ENCODE measurements at regions of chr11 and their contacts with region 1.

Region 1: GRCh38 chr11:112588252-112588694 is 327.6 kb upstream of the PLET1 start:
- DNase-seq: peak; percentile 69
- H3K4me3 ChIP-seq: no peak overlapping the region
- H3K27ac ChIP-seq: peak overlapping the region in 1 of 2 experiments; percentile 62; a peak in 2 of 4 replicates
- H3K4me1 ChIP-seq: peaks cover 7% of the 10 kb centered on the region in 2 experiments; a peak in 3 of 4 replicates
- H3K27me3 ChIP-seq: no peaks in the 10 kb centered on the region
- CTCF ChIP-seq: peak; percentile 85
- EP300 ChIP-seq: no peak
- RAD21 ChIP-seq: peak; percentile 97

Region 2: DNA sequence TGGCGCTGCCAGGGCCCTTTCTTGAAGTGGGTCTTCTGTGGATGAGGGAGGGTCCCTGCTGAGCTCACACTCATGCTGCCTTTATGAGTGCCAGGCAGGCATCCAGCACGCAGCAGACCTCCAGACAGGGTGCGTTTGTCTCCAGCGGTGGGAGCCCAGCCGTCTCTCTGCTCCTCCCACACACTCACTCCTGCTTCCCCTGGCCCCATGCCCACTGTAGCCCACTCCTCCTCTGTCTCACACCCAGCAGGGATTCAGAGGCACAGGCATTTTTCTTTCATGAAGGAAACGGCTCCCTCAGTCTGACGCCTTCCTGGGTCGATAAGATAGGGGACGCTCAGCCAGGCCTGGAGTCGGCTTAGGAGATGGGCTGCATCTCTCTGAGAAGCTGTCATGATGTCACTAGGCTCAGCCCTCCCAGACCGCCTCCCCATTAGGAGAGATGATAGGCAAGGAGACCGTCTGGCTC is 189.0 kb after region 1 on chr11:
- CTCF ChIA-PET with region 1: interaction called, 27 read pairs
- POLR2A ChIA-PET with region 1: interaction called, 5 read pairs
- DNase-seq: peak; percentile 84
- H3K4me3 ChIP-seq: no peak overlapping the region; a peak in 1 of 4 replicates
- H3K27ac ChIP-seq: peak overlapping the region; percentile 22 to 99; a peak in 3 of 4 replicates
- H3K4me1 ChIP-seq: peaks cover 10 to 57% of the 10 kb centered on the region in 2 experiments
- H3K27me3 ChIP-seq: no peaks in the 10 kb centered on the region
- CTCF ChIP-seq: no peak
- EP300 ChIP-seq: no peak; a peak in 1 of 4 replicates
- RAD21 ChIP-seq: no peak; the same call in none of the 2 replicates

Region 3: GRCh38 chr11:112837162-112837826 is 249.0 kb after region 1 on chr11:
- CTCF ChIA-PET with region 1: interaction called, 18 read pairs
- POLR2A ChIA-PET with region 1: interaction called, 3 read pairs
- DNase-seq: peak; percentile 33
- H3K4me3 ChIP-seq: no peak overlapping the region
- H3K27ac ChIP-seq: peak overlapping the region in 1 of 2 experiments; percentile 97; a peak in 2 of 4 replicates
- H3K4me1 ChIP-seq: peaks cover 18 to 52% of the 10 kb centered on the region in 2 experiments
- H3K27me3 ChIP-seq: no peaks in the 10 kb centered on the region
- CTCF ChIP-seq: peak; percentile 23; the same call in 1 of the 2 replicates
- EP300 ChIP-seq: no peak
- RAD21 ChIP-seq: peak; percentile 57

Region 4: GRCh38 chr11:113014262-113015097 is 426.2 kb after region 1 on chr11:
- CTCF ChIA-PET with region 1: interaction called, 10 read pairs
- POLR2A ChIA-PET with region 1: no interaction called
- DNase-seq: peak; percentile 69
- H3K4me3 ChIP-seq: no peak overlapping the region
- H3K27ac ChIP-seq: peak overlapping the region in 1 of 2 experiments; percentile 93; a peak in 2 of 4 replicates
- H3K4me1 ChIP-seq: peaks cover 10 to 23% of the 10 kb centered on the region in 2 experiments; a peak in 3 of 4 replicates
- H3K27me3 ChIP-seq: no peaks in the 10 kb centered on the region
- CTCF ChIP-seq: no peak
- EP300 ChIP-seq: peak in 1 of 2 experiments; percentile 37; a peak in 1 of 4 replicates
- RAD21 ChIP-seq: peak; percentile 49

Region 5: DNA sequence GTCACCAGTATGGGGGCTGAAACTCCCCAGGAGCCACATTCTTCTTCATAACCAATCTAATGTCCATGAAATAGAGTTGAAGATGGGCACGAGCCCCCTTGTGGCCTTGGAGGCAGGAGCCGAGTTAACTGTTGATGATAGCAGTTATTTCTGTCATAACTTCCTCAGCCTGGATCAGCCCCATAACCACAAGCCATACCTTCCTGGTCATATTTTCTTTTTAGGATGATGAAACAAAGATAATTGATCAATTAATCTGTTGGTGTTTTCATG is 661.2 kb after region 1 on chr11:
- CTCF ChIA-PET with region 1: interaction called, 15 read pairs
- POLR2A ChIA-PET with region 1: no interaction called
- DNase-seq: no peak
- H3K4me3 ChIP-seq: no peak overlapping the region
- H3K27ac ChIP-seq: no peak overlapping the region
- H3K4me1 ChIP-seq: peaks cover 0 to 3% of the 10 kb centered on the region in 2 experiments; a peak in 2 of 4 replicates
- H3K27me3 ChIP-seq: no peaks in the 10 kb centered on the region
- CTCF ChIP-seq: peak; percentile 35
- EP300 ChIP-seq: no peak
- RAD21 ChIP-seq: peak; percentile 54

Measured in SK-N-SH (cell line).